Activated T-helper 2 cell treated with anti-CD3 and anti-CD28 coated beads, Interferon-gamma antibody, Interleukin-2, Interleukin-4, amounts not matched to agents 10 μg/mL and 5 μg/mL and 100 μg/mL, durations not matched to agents 14 hours and 24 hours and 36 hours (primary cell): ENCODE measurements at regions of chr17 and their contacts with region 1.

Region 1: GRCh38 chr17:54968262-54968987 is at the starts of genes COX11 and STXBP4:
- DNase-seq: peak; percentile 93
- H3K4me3 Mint-ChIP-seq: no peak within 1 kb of the TSS
- H3K27ac Mint-ChIP-seq: no peak within 1 kb of the TSS
- H3K4me1 Mint-ChIP-seq: peaks cover 31% of the 10 kb centered on the region
- H3K27me3 Mint-ChIP-seq: no peaks in the 10 kb centered on the region
- total RNA-seq, gene COX11: 48.9 and 54.0 TPM in 2 replicates
- total RNA-seq, gene STXBP4: 7.4 and 7.6 TPM in 2 replicates

Region 2: DNA sequence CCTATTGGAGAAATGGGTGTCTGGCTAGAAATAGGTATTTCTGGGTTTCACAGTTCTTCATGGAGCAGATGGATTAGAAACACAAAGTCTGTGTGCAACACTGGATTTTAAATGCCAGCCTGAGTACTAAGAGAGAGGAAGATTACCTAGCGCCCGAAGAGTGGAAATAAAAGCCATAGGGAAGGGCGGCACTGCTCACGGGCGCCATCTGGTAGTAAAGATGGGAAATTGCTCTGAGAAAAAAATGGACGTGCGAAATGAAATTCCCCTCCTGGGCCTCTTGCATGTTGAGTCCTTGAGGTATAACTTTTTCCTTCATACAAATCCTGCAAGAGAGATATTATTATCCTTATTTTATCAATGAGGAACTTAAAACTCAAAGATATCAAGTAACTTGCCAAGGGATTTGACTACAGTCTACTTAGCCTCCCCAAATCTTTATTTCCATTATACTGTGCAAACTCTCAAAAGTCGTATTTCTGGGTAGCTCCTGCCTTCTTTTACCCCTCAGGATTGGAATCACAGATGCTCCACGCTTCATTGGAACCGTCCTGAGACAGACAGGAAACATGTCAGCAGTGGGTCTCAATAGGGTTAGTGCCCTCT is 380.4 kb after region 1 on chr17:
- intact Hi-C with region 1: loop called (anchors 5 kb)
- DNase-seq: peak; percentile 28
- H3K4me3 Mint-ChIP-seq: no peak overlapping the region
- H3K27ac Mint-ChIP-seq: no peak overlapping the region
- H3K4me1 Mint-ChIP-seq: peaks cover 58% of the 10 kb centered on the region
- H3K27me3 Mint-ChIP-seq: peaks cover 2% of the 10 kb centered on the region